Spleen (tissue), 13 donors: ENCODE measurements at regions of chr6 and their contacts with region 1.

Region 1: DNA sequence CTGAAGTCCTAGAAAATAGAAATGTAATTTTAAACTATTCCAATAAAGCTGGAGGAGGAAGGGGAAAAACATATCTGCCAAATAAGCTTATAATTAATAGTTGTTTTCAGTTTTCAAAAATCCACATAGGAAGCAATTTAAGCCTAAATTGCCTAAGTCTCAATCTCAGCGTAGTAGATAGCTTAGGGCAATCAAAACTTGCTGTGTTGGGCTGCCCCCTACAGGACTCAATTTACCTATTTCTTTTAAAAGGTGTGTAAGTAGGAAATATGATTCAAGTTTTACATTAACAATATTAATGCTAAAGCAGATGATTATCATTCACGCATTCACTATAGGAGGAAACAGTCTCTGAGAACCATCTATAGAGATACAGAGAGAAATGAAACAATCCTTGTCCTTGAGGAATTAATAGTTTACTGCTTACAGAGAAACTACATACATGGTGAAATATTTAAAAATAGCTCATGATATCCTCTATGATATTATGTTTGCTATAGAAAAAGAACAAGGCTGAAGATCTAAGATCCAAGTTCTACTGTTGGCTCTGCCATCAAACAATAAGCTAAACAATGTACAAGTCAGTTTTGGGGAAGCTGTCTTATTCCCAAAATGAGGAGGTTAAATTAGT is 102.1 kb downstream of the ATG5 start:
- DNase-seq: no peak
- H3K4me3 ChIP-seq: no peak overlapping the region
- H3K27ac ChIP-seq: no peak overlapping the region
- H3K4me1 ChIP-seq: peaks cover 0 to 12% (median 0%) of the 10 kb centered on the region in 6 donors
- H3K27me3 ChIP-seq: no peaks in the 10 kb centered on the region
- CTCF ChIP-seq: peak in 9 of 11 experiments; percentile 26 to 76 (median 63)
- POLR2A ChIP-seq: no peak

Region 2: DNA sequence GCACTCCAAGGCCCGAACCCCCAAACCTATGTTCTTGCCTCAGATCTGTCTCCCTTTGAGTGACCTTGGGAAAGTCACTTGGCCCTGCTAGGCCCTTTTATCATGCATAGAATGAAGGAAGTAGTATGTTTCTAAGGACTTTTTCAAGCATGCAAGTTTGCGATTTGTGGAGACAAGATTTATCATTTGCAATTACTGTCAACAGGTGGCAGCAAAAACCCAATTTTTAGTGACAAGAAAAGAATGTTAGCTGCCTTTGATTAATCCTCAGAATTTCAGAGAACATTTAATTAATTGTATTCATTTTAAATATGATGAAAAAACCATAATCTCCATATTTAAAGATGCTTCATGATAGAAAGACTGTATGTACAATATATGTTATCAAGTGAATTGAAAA is 792.2 kb before region 1 on chr6:
- intact Hi-C with region 1: loop called (anchors 5 kb)
- DNase-seq: no peak
- H3K4me3 ChIP-seq: no peak overlapping the region
- H3K27ac ChIP-seq: no peak overlapping the region
- H3K4me1 ChIP-seq: peaks cover 0 to 5% (median 0%) of the 10 kb centered on the region in 6 donors
- H3K27me3 ChIP-seq: no peaks in the 10 kb centered on the region
- CTCF ChIP-seq: peak in 9 of 11 experiments; percentile 16 to 63 (median 48)
- POLR2A ChIP-seq: no peak

Region 3: DNA sequence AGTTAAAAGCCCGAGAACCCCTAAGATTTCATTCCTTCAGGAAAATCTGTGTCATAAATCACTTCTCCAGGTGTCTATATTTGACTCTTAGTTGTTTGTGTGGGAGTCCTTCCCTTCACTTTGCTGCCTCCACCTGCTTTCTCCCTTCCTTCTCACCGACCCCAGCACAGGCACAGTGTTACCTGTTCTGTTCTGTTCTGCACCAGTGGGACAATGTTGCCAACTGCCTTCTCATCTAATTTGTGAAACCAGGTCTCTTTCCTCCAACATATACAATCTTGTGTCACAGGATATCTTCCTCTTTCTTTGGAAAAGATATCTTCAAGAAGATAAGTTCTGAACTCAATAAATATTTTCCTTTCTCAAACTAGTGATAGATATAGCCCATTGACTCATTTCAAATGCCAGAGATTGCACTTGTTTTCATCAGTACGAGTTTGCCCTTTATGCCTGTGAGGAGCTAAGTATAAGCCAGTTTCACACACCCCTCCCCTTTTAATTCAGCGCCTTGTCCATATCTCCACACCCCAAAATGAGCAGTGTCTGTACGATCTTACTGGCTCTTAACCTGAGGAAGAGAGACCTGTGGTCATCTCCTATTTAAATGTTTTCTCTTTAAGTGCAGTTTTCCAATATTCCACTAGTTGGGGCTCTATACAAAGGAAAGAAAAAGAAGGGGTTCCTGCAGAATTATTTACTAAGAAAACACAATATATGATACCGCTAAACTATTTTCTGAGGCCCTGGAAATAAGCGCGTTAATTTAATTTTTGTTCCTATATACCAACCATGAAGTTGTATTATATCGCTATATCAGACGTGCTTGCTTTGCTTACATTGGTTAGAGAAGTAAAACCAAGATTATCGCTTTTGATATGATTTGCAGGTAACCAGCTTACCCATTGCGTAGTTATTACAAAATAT is 738.9 kb before region 1 on chr6:
- intact Hi-C with region 1: loop called (anchors 10 kb)
- DNase-seq: no peak
- H3K4me3 ChIP-seq: peak overlapping the region in 1 of 8 donors; percentile 16
- H3K27ac ChIP-seq: peak overlapping the region in 4 of 8 donors; percentile 4 to 77 (median 64)
- H3K4me1 ChIP-seq: peaks cover 4 to 50% (median 18%) of the 10 kb centered on the region in 6 donors
- H3K27me3 ChIP-seq: no peaks in the 10 kb centered on the region
- CTCF ChIP-seq: peak in 10 of 11 experiments; percentile 28 to 72 (median 64)
- POLR2A ChIP-seq: no peak

Region 4: GRCh38 chr6:105733565-105734162 is 489.8 kb before region 1 on chr6:
- intact Hi-C with region 1: loop called (anchors 5 kb)
- DNase-seq: no peak
- H3K4me3 ChIP-seq: no peak overlapping the region
- H3K27ac ChIP-seq: no peak overlapping the region
- H3K4me1 ChIP-seq: peaks cover 0 to 4% (median 0%) of the 10 kb centered on the region in 6 donors
- H3K27me3 ChIP-seq: no peaks in the 10 kb centered on the region
- CTCF ChIP-seq: peak; percentile 30 to 78 (median 65)
- POLR2A ChIP-seq: no peak

Region 5: GRCh38 chr6:106103728-106104109 is 119.7 kb before region 1 on chr6:
- intact Hi-C with region 1: loop called (anchors 10 kb)
- DNase-seq: no peak
- H3K4me3 ChIP-seq: peak overlapping the region in 6 of 8 donors; percentile 13 to 72 (median 44)
- H3K27ac ChIP-seq: peak overlapping the region in 7 of 8 donors; percentile 1 to 96 (median 94)
- H3K4me1 ChIP-seq: peaks cover 7 to 86% (median 45%) of the 10 kb centered on the region in 6 donors
- H3K27me3 ChIP-seq: no peaks in the 10 kb centered on the region
- CTCF ChIP-seq: no peak
- POLR2A ChIP-seq: no peak

Region 6: DNA sequence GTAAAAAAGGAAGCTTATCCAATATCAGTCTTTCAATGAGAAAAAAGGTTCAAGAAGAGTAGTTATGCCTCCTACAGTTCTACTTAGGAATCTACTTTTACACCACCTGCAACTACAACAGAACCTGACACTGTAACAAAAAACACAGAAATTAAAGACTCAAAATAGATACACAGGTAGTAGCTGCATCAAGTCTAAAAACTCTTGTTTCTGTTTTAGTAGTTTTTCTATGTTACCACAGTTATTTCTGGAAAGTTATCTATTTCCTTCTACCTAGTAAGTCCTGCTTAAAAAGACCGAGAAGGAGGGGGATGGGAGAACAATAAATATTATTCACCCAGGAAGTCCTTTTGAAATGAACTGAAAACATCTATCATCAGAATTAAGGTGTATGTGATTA is 49.7 kb after region 1 on chr6:
- intact Hi-C with region 1: no loop called
- DNase-seq: no peak
- H3K4me3 ChIP-seq: no peak overlapping the region
- H3K27ac ChIP-seq: peak overlapping the region in 1 of 8 donors; percentile 4
- H3K4me1 ChIP-seq: peaks cover 0 to 38% (median 12%) of the 10 kb centered on the region in 6 donors
- H3K27me3 ChIP-seq: no peaks in the 10 kb centered on the region
- CTCF ChIP-seq: no peak
- POLR2A ChIP-seq: no peak

Region 7: GRCh38 chr6:106287205-106287604 is 63.8 kb after region 1 on chr6:
- intact Hi-C with region 1: no loop called
- DNase-seq: no peak
- H3K4me3 ChIP-seq: no peak overlapping the region
- H3K27ac ChIP-seq: no peak overlapping the region
- H3K4me1 ChIP-seq: peaks cover 0 to 2% (median 0%) of the 10 kb centered on the region in 6 donors
- H3K27me3 ChIP-seq: no peaks in the 10 kb centered on the region
- CTCF ChIP-seq: no peak
- POLR2A ChIP-seq: no peak